AG04450 (cell line): ENCODE measurements at regions of chr2 and their contacts with region 1.

Region 1: GRCh38 chr2:190804182-190804795 is 76.3 kb upstream of the GLS start:
- DNase-seq: no peak
- H3K4me3 ChIP-seq: no peak overlapping the region
- H3K27ac ChIP-seq: no peak overlapping the region
- H3K27me3 ChIP-seq: no peaks in the 10 kb centered on the region
- CTCF ChIP-seq: peak; percentile 67

Region 2: DNA sequence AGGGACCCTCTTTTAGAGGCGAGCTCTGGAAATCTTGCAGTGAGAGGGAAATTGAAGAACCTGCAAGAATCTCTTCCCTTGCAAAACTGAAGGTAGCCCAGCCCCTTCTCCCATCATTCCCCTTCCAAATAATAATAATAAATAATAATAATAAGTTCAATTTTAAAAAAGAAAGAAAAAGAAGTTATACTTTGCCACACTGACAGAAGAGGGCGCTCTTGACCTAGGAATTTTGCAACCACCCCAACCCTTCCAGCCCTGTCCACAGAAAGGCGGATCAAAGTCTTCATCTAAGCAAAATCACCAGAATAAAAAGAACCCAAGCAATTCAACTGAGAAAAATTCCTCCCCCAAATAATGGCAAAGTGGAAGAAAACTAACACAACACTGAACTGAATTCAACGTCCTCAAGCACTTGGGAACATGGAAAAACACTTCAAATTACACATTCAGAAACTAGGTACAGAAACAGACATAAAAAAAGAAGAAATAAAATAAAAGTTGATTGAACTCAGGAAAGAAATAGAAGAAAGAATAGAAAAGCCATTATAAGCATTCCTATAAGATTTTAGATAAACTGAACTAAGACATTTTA is 22.6 kb before region 1 on chr2:
- CTCF ChIA-PET with region 1: interaction called, 12 read pairs
- POLR2A ChIA-PET with region 1: no interaction called
- DNase-seq: peak; percentile 47
- H3K4me3 ChIP-seq: no peak overlapping the region
- H3K27ac ChIP-seq: no peak overlapping the region
- H3K27me3 ChIP-seq: peaks cover 9% of the 10 kb centered on the region
- CTCF ChIP-seq: peak; percentile 59

Region 3: DNA sequence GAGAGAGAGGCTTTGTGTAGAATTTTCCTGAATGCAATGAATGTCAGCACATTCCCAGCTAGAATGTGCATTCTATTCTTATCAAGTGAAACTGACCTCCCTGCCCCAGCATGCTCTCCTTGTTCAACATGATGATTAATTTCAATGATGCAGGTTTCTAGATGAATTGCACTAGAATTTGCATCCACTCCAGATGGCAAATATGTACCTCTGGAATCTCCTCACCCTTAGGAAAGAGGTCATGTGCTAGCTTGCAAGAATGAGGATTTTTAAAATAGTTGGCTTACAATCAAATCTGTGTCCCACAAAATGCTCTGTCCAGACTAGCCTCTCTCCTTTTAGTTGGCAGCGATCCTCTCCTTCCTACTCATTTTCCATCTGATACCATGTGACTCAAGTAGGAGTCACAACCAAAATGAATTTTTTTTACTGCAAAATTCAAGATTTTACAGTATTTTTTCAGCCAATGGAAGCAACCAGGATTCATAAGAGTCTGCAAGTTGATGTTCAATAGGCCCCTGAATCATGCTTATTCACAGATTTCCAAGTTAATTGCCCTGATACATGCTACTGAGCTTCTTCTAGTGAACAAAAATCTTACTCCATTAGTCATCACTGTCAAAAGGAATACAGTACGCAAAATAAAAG is 367.5 kb after region 1 on chr2:
- CTCF ChIA-PET with region 1: no interaction called
- POLR2A ChIA-PET with region 1: no interaction called
- DNase-seq: peak; percentile 81
- H3K4me3 ChIP-seq: no peak overlapping the region
- H3K27ac ChIP-seq: peak overlapping the region; percentile 81
- H3K27me3 ChIP-seq: no peaks in the 10 kb centered on the region
- CTCF ChIP-seq: no peak